Left ventricle myocardium superior (tissue), 1 donor: ENCODE measurements at regions of chr4 and their contacts with region 1.

Region 1: GRCh38 chr4:26410385-26411293 is 79.6 kb downstream of the CCKAR start:
- DNase-seq: no peak
- ATAC-seq: peak; percentile 27

Region 2: DNA sequence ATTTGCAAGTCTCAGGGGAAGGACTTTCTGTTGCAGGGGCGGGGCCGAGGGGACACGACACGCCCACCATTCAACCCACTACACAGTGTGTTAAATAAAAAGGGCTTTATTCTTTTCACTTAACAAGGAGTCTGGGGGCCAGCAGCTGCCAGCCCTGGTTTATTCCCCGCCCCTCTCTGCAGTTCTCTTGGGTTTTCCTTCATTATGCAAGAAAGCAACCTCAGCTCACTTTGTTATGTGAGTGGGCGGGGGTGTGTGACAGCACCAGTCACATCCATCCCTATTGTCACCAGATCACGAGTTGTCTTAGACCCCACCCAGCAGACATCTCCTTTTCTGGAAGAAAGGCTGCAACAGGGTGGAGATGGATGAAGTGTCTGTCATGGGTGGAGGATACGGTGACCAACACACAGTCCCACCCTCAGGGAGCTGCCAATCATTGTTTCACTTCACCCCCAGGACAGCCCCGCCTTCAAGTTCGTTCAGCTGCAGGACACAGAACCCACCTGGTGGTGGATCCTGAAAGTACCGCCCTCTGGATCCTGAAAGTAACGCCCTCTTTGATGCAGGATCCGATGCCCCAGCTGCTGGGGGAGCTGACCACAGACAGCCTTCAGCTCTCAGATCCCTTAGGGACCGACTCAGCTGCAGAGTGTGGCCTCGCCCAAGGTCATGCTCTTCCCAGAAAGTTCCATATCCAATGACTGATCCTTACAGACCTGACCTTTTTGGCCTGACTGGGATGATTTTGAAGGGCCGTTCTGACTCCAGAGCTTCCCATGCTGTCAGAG is 417.0 kb before region 1 on chr4:
- intact Hi-C with region 1: loop called (anchors 2 kb)
- DNase-seq: peak; percentile 49
- ATAC-seq: peak; percentile 76

Region 3: GRCh38 chr4:26217961-26218676 is 192.5 kb before region 1 on chr4:
- intact Hi-C with region 1: no loop called
- DNase-seq: peak; percentile 44
- ATAC-seq: peak; percentile 82

Region 4: DNA sequence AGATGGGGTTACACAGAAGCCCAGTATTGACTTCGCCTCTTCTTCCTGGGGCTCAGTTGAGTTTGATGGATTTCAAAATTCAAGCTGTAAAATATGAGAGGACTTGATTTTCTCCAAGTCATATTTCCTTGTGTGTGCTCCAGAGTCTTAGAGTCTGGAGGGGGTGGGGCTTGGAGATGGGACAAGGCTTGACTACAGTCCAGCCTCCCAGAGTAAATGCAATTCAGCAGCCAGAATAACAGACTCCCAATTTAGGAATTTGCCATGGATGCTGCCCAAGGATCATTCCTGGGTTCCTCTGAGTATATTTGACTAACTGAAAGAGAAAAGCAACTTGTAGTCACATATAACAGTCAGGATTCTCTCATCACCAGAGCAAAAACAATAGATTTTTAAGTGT is 143.6 kb before region 1 on chr4:
- intact Hi-C with region 1: no loop called
- DNase-seq: peak; percentile 73
- ATAC-seq: peak; percentile 95

Region 5: GRCh38 chr4:26330186-26330787 is 80.4 kb before region 1 on chr4:
- intact Hi-C with region 1: loop called (anchors 5 kb)
- DNase-seq: no peak
- ATAC-seq: peak; percentile 74

Region 6: DNA sequence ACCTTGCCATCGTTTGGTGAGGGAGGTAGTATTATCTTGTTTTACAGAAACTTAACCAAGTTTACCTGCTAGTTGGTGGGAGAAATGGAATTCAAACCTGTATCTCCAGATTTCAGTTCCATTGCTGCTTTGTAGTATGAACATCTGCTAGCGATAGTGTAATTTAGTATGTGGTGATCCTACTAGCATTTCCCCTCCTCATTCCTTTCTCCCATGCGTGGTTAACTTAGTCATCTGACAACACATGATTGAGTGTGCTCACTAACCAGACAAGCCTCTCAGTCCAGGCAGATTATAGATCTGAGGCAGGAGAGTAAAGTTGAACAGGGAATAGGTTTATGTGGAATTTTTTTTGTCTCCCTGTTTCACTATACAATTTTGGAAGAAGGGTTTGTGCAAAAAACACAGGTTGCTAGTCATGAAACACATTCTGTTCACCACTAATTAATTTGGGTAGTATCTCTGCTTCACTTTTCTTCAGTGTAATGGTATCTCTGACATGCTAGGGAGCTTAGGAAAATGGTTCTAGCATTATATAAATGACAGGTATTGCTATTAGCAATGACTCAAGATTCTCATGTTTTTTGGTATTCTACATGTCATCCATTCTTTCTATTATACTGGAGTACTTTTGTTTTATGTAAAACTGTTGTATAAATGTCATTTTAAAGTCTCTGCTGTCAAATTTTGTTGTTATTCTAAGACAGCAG is 68.2 kb before region 1 on chr4:
- intact Hi-C with region 1: no loop called
- DNase-seq: no peak
- ATAC-seq: peak; percentile 31

Region 7: GRCh38 chr4:26568446-26568994 is 157.9 kb after region 1 on chr4:
- intact Hi-C with region 1: no loop called
- DNase-seq: no peak
- ATAC-seq: no peak